Breast epithelium (tissue), 4 donors: ENCODE measurements at regions of chr3 and their contacts with region 1.

Region 1: GRCh38 chr3:34696831-34697230 is 898.4 kb downstream of the PDCD6IP start:
- DNase-seq: no peak
- H3K4me3 ChIP-seq: no peak overlapping the region
- H3K27ac ChIP-seq: no peak overlapping the region
- H3K4me1 ChIP-seq: no peaks in the 10 kb centered on the region
- H3K27me3 ChIP-seq: no peaks in the 10 kb centered on the region
- CTCF ChIP-seq: no peak
- POLR2A ChIP-seq: no peak

Region 2: GRCh38 chr3:34533451-34533850 is 163.4 kb before region 1 on chr3:
- intact Hi-C with region 1: loop called (anchors 5 kb)
- DNase-seq: no peak
- H3K4me3 ChIP-seq: no peak overlapping the region
- H3K27ac ChIP-seq: no peak overlapping the region
- H3K4me1 ChIP-seq: no peaks in the 10 kb centered on the region
- H3K27me3 ChIP-seq: no peaks in the 10 kb centered on the region
- CTCF ChIP-seq: no peak
- POLR2A ChIP-seq: no peak

Region 3: DNA sequence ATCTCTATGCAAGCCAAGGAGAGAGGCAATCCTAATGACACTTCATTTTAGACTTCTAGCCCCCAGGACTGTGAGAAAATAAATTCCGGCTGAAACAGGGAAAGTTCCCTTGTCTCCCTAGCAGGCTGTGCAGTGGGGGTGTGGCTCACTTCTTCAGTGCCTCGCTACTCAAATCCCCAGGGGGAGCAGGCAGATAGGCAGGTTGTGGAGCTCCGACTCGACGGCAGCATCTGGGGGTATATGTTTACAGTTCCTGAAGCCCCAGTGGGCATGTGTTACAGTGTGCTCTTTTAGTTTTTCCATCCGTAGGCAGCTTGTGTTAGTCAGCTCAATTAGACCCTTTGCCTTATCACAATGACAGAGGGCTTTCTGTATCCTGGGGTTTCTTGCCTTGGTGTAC is 61.9 kb before region 1 on chr3:
- intact Hi-C with region 1: no loop called
- DNase-seq: no peak
- H3K4me3 ChIP-seq: no peak overlapping the region
- H3K27ac ChIP-seq: no peak overlapping the region
- H3K4me1 ChIP-seq: no peaks in the 10 kb centered on the region
- H3K27me3 ChIP-seq: no peaks in the 10 kb centered on the region
- CTCF ChIP-seq: no peak
- POLR2A ChIP-seq: no peak

Region 4: GRCh38 chr3:35254917-35255316 is 558.1 kb after region 1 on chr3:
- intact Hi-C with region 1: loop called (anchors 5 kb)
- DNase-seq: no peak
- H3K4me3 ChIP-seq: no peak overlapping the region
- H3K27ac ChIP-seq: no peak overlapping the region
- H3K4me1 ChIP-seq: no peaks in the 10 kb centered on the region
- H3K27me3 ChIP-seq: no peaks in the 10 kb centered on the region
- CTCF ChIP-seq: no peak
- POLR2A ChIP-seq: no peak